PC-3 (cell line): ENCODE measurements at regions of chr14 and their contacts with region 1.

Region 1: DNA sequence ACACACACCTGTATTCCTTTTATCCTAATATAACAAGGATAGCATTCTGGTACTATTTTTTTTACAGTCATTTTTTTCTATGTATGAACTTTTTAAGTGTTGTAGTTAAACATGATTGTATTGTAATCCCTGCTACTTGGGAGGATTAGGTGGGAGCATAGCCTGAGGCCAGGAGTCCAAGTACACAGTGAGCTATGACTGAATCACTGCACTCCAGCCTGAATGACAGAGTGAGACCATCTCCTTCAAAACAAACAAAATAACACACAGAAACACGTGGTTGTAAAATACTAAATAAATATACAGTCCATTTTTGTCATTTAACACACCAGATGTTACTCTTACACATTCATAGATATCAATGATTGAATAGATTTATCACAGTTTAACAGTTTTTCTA is 56.9 kb downstream of the MAP4K5 start:
- DNase-seq: peak; percentile 95
- ATAC-seq: peak; percentile 100
- H3K4me3 ChIP-seq: no peak overlapping the region
- H3K27ac ChIP-seq: peak overlapping the region; percentile 26
- H3K4me1 ChIP-seq: peaks cover 11% of the 10 kb centered on the region; the same call in 1 of the 2 replicates
- H3K27me3 ChIP-seq: no peaks in the 10 kb centered on the region
- CTCF ChIP-seq: no peak

Region 2: DNA sequence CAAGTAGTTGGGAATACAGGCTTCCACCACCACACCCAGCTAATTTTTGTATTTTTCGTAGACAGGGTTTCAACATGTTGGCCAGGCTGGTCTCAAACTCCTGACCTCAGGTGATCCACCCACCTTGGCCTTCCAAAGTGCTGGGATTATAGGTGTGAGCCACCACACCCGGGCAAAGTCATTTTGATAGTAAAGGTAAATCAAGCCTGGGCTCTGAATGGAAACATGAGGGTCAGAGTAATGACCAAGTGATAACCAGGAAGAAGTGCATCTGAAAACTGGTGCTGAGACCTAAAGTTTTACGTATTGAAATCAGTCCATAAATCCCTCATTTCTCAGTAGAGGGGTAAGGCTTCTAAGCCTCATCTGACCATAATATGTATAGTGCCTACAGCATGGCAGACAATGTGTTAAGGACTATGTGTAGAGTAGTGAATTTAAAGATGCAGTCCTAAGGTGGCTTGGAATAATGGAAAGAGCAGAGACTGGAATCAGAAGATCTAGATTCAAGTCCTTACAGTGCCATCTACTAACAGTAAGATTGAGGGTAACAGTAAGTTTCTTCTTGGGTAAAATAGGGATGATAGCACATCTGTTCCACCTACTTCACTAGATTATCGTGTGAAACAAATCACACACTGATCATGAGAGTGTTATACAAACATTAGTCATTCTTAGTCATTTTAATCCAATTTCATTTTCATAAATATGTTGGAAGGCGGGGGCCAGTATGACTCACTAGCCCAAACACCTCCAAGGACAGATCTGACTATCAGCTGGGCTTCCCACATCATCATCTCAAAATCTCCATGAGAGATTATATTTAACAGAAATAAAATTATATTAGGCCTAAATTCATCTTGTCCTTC is 45.7 kb after region 1 on chr14:
- CTCF ChIA-PET with region 1: no interaction called
- POLR2A ChIA-PET with region 1: no interaction called
- intact Hi-C with region 1: loop called (anchors 1 kb)
- DNase-seq: peak; percentile 93
- ATAC-seq: peak; percentile 92
- H3K4me3 ChIP-seq: 0 out of 2 replicates have a peak overlapping the region, but pooled peaks have one; percentile 2
- H3K27ac ChIP-seq: peak overlapping the region; percentile 88
- H3K4me1 ChIP-seq: peaks cover 32% of the 10 kb centered on the region
- H3K27me3 ChIP-seq: no peaks in the 10 kb centered on the region
- CTCF ChIP-seq: no peak